ENCODE measurements at regions of chr20 and their contacts with region 1.

Region 1: GRCh38 chr20:43537921-43538877 is 20.6 kb upstream of the SGK2 start:
- DNase-seq: peak; percentile 73
- ATAC-seq: peak; percentile 82

Region 2: DNA sequence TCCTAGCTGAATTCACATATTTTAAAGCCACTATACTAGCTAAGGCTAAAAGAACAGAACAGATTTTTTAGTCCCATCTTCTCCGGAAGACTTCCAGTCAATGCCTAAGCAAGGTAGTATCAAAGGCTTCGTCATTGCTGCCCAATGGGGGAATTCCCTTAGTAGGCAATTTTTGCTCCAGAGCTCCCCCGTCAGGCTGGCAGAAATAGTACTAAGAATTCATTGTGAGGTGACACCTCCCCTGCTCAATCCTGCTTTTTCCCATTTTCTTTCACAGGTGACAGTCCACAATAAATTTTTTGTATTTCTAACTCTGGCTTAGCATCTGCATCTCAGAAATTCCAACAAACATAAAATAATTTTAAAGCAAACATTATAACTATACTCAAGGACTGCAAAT is 133.3 kb before region 1 on chr20:
- intact Hi-C with region 1: no loop called
- DNase-seq: no peak
- ATAC-seq: no peak

Region 3: GRCh38 chr20:43590392-43591323 is 52.5 kb after region 1 on chr20 and contains the start of gene IFT52:
- intact Hi-C with region 1: loop called (anchors 5 kb)
- DNase-seq: peak; percentile 96
- ATAC-seq: peak; percentile 99
- total RNA-seq, gene IFT52: 6.5 TPM

Region 4: GRCh38 chr20:44074252-44075151 is 536.3 kb after region 1 on chr20:
- intact Hi-C with region 1: loop called (anchors 5 kb)
- DNase-seq: peak; percentile 77
- ATAC-seq: peak; percentile 85

Region 5: DNA sequence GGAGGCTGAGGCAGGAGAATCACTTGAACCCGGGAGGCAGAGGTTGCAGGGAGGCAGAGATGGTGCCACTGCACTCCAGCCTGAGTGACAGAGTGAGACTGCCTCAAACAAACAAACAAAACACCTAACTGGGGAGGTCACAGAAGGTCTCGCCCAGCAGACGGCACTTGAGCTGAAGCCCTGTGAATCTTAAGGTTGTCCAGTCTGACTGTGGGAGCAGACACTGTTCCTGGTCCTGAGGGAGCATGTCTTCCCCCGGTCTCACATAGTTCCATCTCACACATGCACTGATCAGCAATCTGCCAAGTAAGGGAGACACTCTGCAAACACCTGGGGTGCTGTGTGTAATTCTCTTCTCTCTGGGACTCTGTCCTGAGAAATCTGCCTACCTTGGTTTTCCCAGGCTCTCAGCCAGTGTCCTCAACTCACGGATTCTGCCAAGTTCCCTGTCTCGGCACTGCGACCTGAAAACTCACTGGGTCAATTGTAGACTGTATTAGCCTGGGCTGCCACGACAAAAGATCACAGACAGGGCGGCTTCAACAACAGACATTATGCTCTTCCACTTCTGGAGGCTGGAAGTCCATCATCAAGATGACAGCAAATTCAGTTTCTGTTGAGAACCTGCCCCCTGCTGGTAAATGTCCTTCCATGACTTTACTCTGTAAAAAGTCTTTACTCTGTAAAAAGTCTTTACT is 554.5 kb after region 1 on chr20:
- intact Hi-C with region 1: loop called (anchors 5 kb)
- DNase-seq: no peak
- ATAC-seq: no peak

Measured in Right ventricle myocardium inferior (tissue), 1 donor.